ENCODE measurements at regions of chr3 and their contacts with region 1.

Region 1: GRCh38 chr3:23442598-23443383 is 239.7 kb downstream of the UBE2E2 start:
- DNase-seq: peak; percentile 57
- H3K4me3 ChIP-seq: no peak overlapping the region
- H3K27ac ChIP-seq: no peak overlapping the region
- H3K4me1 ChIP-seq: peaks cover 63% of the 10 kb centered on the region
- CTCF ChIP-seq: no peak

Region 2: GRCh38 chr3:23256741-23257435 is 185.9 kb before region 1 on chr3:
- CTCF ChIA-PET with region 1: no interaction called
- POLR2A ChIA-PET with region 1: interaction called, 10 read pairs
- intact Hi-C with region 1: no loop called
- DNase-seq: no peak
- H3K4me3 ChIP-seq: no peak overlapping the region
- H3K27ac ChIP-seq: no peak overlapping the region
- H3K4me1 ChIP-seq: peaks cover 7% of the 10 kb centered on the region
- CTCF ChIP-seq: no peak

Region 3: GRCh38 chr3:23421811-23422516 is 20.8 kb before region 1 on chr3:
- CTCF ChIA-PET with region 1: interaction called, 3 read pairs
- POLR2A ChIA-PET with region 1: interaction called, 16 read pairs
- intact Hi-C with region 1: no loop called
- DNase-seq: no peak
- H3K4me3 ChIP-seq: no peak overlapping the region
- H3K27ac ChIP-seq: no peak overlapping the region
- H3K4me1 ChIP-seq: peaks cover 18% of the 10 kb centered on the region
- CTCF ChIP-seq: no peak

Region 4: DNA sequence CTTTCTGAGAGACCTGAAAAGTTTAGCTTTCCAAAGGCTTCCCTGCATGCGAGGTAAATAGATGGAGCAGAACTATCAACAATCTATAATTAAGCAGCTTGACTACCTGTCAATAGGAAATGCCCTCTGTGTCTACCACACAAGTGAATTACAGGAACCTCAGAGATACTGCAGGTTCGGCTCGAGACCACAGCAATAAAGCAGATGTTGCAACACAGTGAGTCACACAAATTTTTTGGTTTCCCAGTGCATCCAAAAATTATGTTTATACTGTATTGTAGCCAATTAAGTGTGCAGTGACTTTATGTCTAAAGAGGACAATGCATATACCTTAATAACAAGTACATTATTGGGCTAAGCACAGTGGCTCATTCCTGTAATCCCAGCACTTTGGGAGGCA is 12.3 kb after region 1 on chr3:
- CTCF ChIA-PET with region 1: no interaction called
- POLR2A ChIA-PET with region 1: interaction called, 24 read pairs
- intact Hi-C with region 1: no loop called
- DNase-seq: no peak
- H3K4me3 ChIP-seq: no peak overlapping the region
- H3K27ac ChIP-seq: no peak overlapping the region
- H3K4me1 ChIP-seq: peaks cover 4% of the 10 kb centered on the region
- CTCF ChIP-seq: no peak

Region 5: DNA sequence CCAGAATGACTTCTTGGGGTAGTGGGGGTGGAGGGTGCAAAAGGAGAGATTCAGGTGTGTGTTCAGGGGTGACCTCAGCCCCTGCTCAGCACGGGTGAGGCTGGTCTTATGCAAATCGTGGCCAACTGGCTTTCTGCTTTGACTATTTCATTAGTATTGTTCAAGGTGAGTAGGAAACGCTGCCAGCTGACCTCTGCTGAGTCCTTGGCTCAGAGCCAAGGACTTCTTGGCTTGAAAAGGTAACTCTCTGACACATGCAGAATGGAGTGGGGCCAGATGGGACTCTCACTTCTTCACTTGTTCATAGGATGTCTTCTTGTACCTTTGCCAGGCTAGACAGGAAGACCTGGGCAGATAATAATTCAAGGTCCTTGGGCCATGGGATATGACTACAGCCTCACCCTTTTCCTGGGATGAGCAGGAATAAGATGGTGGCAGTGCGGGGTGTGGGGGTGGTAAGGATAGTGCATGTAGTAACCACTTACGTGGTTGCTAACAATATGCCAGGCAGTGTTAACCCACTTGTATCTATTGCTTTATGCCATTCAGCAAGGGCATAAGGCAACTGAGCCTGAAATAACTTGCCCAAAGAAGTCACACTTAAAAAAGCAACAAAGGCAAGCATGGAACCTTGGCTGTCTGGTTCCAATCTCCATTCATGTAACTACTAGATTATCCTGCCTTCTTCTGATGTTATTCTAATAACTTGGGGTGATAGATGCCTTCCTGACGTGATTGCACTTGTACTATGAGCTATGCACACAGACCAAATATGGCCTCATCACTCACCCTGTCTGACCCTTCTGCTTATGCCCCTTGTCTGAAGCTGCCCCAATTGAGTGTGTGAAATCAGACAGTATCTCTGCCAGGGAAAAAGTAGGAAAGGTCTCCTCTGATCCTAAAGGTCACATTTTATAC is 695.4 kb after region 1 on chr3:
- CTCF ChIA-PET with region 1: no interaction called
- POLR2A ChIA-PET with region 1: no interaction called
- intact Hi-C with region 1: no loop called
- DNase-seq: peak; percentile 76
- H3K4me3 ChIP-seq: no peak overlapping the region
- H3K27ac ChIP-seq: peak overlapping the region; percentile 41
- H3K4me1 ChIP-seq: peaks cover 32% of the 10 kb centered on the region
- CTCF ChIP-seq: no peak

Region 6: DNA sequence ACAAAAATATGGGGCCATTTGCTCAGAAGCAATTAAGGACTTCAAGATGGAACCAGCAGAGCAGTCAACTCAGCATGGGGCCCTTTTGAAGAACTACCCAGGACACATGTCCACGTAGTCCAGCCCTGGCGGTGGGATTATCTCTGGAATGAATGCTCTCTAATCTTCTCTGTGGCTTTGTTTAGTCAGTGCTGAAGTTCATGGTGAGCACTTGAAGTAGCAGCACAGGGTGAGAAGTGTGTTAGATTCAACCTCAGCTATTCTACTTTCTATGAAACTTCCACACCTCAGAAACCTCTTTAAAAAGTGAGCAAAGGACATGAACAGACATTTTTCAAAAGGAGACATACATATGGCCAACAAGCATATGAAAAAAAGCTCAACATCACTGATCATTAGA is 977.4 kb after region 1 on chr3:
- CTCF ChIA-PET with region 1: no interaction called
- POLR2A ChIA-PET with region 1: no interaction called
- intact Hi-C with region 1: no loop called
- DNase-seq: no peak
- H3K4me3 ChIP-seq: no peak overlapping the region
- H3K27ac ChIP-seq: no peak overlapping the region
- H3K4me1 ChIP-seq: no peaks in the 10 kb centered on the region
- CTCF ChIP-seq: no peak